Dorsolateral prefrontal cortex (tissue), 120 donors: ENCODE measurements at regions of chr2 and their contacts with region 1.

Region 1: GRCh38 chr2:131055169-131056065 is 37.8 kb downstream of the FAM168B start:
- DNase-seq: peak in 4 of 10 donors; percentile 64 to 76 (median 72)
- H3K4me3 ChIP-seq: peak overlapping the region in 7 of 59 donors; percentile 3 to 42 (median 25)
- H3K27ac ChIP-seq: peak overlapping the region in 51 of 59 donors; percentile 9 to 92 (median 75)
- H3K27me3 ChIP-seq: no peaks in the 10 kb centered on the region
- CTCF ChIP-seq: no peak

Region 2: GRCh38 chr2:131093006-131093695 is 37.7 kb after region 1 on chr2 and contains the start of gene FAM168B:
- intact Hi-C with region 1: loop called (anchors 2 to 5 kb)
- DNase-seq: peak; percentile 63 to 89 (median 80)
- H3K4me3 ChIP-seq: peak within 1 kb of the TSS; percentile 59 to 97 (median 85)
- H3K27ac ChIP-seq: peak within 1 kb of the TSS; percentile 79 to 99 (median 97)
- H3K27me3 ChIP-seq: no peaks in the 10 kb centered on the region
- CTCF ChIP-seq: peak in 21 of 56 donors; percentile 4 to 58 (median 32)
- total RNA-seq, gene FAM168B: 119 to 220 (median 170) TPM